ENCODE measurements at regions of chr7 and their contacts with region 1.

Region 1: GRCh38 chr7:25636871-25637283 is 408.6 kb upstream of the NPVF start:
- DNase-seq: peak; percentile 35 to 71 (median 59)
- H3K4me3 ChIP-seq: no peak overlapping the region
- H3K27ac ChIP-seq: no peak overlapping the region
- H3K4me1 ChIP-seq: peaks cover 22% of the 10 kb centered on the region
- H3K27me3 ChIP-seq: no peaks in the 10 kb centered on the region
- CTCF ChIP-seq: no peak
- EP300 ChIP-seq: no peak
- POLR2A ChIP-seq: no peak

Region 2: DNA sequence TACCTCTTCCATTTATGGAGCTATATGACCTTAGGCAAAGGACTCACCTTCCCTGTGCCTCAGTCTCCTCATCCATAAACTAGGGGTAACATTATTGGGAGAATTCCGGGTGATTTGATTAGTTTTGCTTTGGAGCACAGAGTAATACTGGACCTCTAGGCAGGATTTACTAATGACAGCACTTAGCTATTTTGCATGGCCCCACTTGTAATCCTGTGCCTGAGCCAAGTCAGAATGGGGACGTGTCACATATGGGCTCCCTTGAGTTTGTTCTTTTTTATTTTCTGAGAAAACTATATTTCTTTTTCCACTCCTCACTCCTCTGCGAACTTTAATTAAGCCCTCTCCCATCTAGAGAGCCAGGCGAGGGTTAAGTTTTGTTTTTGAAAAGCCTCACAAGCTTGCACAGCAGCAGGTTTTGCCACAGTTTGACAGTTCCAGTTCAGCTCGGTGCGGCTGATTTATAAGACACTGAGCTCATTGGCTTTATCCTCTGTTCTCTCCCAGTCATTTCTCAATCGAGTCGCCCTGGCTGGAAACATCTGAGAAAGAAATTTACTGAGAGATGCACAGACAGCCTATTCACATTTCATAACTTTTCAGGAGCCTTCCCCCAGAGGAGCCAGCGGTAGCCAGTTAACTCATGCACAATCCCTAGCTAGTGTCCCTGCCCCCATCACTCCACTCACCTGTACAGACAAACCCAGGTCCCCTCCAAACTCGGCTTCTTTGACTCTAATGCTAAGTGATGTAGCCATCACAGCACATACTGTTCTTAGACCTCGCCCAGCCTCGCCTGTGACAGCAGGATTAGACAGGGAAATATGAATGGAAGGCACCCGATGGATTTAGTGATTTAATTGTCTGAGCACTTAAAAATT is 33.3 kb after region 1 on chr7:
- intact Hi-C with region 1: loop called in 1 of 4 experiments (anchors 2 kb)
- DNase-seq: peak in 2 of 5 donors; percentile 38 to 62
- H3K4me3 ChIP-seq: no peak overlapping the region
- H3K27ac ChIP-seq: no peak overlapping the region
- H3K4me1 ChIP-seq: peaks cover 11% of the 10 kb centered on the region
- H3K27me3 ChIP-seq: no peaks in the 10 kb centered on the region
- CTCF ChIP-seq: no peak
- EP300 ChIP-seq: no peak
- POLR2A ChIP-seq: no peak

Region 3: DNA sequence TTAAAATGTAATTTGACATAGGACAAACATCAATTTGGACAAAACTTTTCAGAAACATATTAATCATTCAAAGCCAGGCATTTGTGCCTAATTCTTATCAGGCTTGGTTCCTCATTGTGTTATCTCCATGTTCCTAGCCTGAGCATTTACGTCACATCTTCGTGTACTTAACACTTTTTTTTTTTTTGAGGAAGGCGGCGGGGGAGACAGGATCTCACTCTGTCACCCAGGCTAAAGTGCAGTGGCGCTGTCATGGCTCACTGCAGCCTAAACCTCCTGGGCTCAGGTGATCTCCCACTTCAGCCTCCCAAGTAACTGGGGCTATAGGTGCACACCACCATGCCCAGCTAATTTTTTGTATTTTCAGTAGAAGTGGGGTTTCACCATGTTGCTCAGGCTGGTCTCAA is 543.9 kb after region 1 on chr7:
- intact Hi-C with region 1: no loop called
- DNase-seq: no peak
- H3K4me3 ChIP-seq: no peak overlapping the region
- H3K27ac ChIP-seq: no peak overlapping the region
- H3K4me1 ChIP-seq: no peaks in the 10 kb centered on the region
- H3K27me3 ChIP-seq: no peaks in the 10 kb centered on the region
- CTCF ChIP-seq: no peak
- EP300 ChIP-seq: no peak
- POLR2A ChIP-seq: no peak

Measured in ovary (tissue), 10 donors.